GM10248 (cell line): ENCODE measurements at regions of chr4 and their contacts with region 1.

Region 1: DNA sequence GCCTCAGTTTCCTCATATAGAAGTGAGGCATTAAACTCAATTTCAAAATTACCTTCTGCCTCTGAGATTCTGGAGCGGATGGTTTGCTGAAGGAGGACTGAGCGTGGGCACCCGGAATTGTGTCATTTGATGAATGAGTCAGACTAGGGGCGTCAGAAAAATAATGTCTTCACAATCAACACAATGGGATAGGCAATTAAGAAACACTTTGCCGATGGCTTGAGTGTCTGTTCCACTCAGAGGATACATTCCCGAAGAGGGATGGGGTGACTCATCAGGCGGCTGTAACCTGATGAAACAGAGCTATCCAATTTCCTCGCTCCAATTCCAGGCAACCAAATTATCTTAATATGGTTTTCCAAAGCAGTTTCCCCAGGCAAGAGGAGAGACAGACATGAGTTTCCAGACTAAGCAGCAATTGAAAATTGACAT is 1.2 kb upstream of the CHRNA9 start:
- DNase-seq: no peak
- CTCF ChIP-seq: no peak

Region 2: DNA sequence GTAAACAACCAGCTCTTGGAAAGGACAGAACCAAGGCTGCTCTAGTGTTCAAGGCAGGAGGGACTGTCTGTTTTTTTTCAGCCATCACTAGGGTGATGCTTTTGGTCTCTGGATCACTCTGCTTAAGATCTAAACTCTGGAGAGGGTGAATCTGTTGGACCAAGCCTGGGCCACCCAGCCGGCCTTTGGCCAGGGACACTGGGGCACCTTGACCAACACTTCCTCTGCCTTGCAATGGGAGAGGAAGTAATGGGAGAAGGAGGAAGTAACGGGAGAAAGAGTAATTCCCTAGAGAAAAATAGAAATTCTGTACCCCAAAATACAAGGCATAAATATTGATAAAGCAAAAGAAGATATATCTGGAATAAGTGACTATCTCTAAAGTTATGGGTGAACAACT is 14.1 kb after region 1 on chr4:
- CTCF ChIA-PET with region 1: interaction called, 12 read pairs
- POLR2A ChIA-PET with region 1: no interaction called
- DNase-seq: no peak
- CTCF ChIP-seq: no peak